ENCODE measurements at regions of chr19 and their contacts with region 1.

Region 1: DNA sequence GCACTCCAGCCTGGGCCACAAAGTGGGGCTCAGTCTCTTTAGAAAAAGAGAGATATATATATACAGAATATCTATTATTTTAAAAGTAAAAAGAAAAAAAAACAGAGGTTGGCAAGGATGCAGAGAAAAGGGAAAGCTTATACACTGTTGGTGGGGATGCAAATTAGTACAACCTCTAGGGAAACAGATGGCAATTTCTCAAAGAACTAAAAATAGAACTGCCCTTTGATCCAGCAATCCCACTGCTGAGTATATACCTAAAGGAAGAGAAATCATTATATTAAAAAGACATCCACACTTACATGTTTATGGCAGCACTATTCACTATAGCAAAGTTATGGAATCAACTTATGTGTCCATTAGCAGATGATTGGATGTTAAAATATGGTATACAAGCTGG is 28.6 kb upstream of the SLC1A6 start:
- DNase-seq: no peak
- H3K4me3 ChIP-seq: no peak overlapping the region
- H3K27ac ChIP-seq: no peak overlapping the region
- H3K4me1 ChIP-seq: peaks cover 7% of the 10 kb centered on the region
- H3K27me3 ChIP-seq: peaks cover 11% of the 10 kb centered on the region
- CTCF ChIP-seq: no peak

Region 2: GRCh38 chr19:14959263-14959662 is 49.0 kb before region 1 on chr19:
- CTCF ChIA-PET with region 1: no interaction called
- dilution Hi-C with region 1: loop called (anchors 5 kb)
- in situ Hi-C with region 1: no loop called
- intact Hi-C with region 1: no loop called
- DNase-seq: no peak
- H3K4me3 ChIP-seq: no peak overlapping the region
- H3K27ac ChIP-seq: no peak overlapping the region
- H3K4me1 ChIP-seq: peaks cover 4% of the 10 kb centered on the region
- H3K27me3 ChIP-seq: no peaks in the 10 kb centered on the region
- CTCF ChIP-seq: no peak

Region 3: DNA sequence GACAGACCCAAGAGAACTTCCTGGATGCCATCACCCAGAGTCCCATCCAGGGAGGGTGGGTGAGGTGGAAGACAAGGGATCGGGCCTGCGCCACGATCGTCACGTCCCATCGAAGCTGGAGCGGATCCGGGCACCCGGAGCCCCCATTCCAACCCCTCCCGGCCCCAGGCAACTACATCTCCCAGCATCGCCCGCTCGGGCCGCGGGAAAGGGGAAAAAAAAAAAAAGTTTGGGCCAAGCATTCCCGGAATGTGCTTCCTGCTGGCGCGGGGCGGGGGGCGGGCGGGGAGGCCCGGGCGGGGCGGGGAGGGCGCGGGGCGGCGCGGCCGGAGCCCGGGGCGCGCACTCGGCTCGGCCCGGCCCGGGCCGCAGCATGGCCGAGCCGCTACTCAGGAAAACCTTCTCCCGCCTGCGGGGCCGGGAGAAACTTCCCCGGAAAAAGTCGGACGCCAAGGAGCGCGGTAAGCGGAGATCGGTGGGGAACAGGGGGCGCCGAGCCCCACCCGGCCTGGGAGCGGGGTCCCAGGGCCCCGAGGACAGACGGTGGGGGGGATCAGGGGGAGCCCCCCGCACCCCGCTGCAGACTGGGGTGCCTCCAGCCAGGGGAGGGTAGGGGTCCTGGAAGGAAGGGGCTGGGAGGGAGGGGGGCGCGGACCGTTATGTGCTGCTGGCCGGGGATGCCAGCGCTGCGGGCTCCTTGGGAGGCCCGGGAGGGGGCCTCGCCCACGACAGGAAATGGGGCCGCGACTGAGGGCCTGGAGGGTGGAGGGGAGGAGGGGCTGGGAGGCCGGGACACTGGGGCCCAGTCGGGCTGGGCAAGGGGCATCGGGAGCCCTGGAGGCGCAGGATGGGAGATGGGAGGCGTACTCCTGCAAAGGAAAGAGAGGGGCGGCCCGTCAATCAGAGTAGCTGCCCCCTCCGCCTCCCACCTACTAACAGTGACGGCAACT is 99.0 kb after region 1 on chr19 and contains the start of gene SYDE1:
- CTCF ChIA-PET with region 1: no interaction called
- dilution Hi-C with region 1: loop called (anchors 5 kb)
- in situ Hi-C with region 1: no loop called
- intact Hi-C with region 1: no loop called
- DNase-seq: peak; percentile 35
- H3K4me3 ChIP-seq: peak within 1 kb of the TSS; percentile 58 to 66 (median 59)
- H3K27ac ChIP-seq: peak within 1 kb of the TSS; percentile 10
- H3K4me1 ChIP-seq: peaks cover 7% of the 10 kb centered on the region
- H3K27me3 ChIP-seq: no peaks in the 10 kb centered on the region
- CTCF ChIP-seq: no peak
- total RNA-seq, gene SYDE1: 10.7 to 11.0 TPM